ENCODE measurements at regions of chr9 and their contacts with region 1.

Region 1: GRCh38 chr9:38088006-38088925 is 19.2 kb upstream of the SHB start:
- DNase-seq: peak; percentile 34 to 85 (median 68)
- ATAC-seq: peak; percentile 86
- H3K4me3 ChIP-seq: no peak overlapping the region
- H3K4me3 Mint-ChIP-seq: no peak overlapping the region
- H3K27ac ChIP-seq: no peak overlapping the region
- H3K27ac Mint-ChIP-seq: no peak overlapping the region
- H3K4me1 ChIP-seq: no peaks in the 10 kb centered on the region
- H3K4me1 Mint-ChIP-seq: no peaks in the 10 kb centered on the region
- H3K27me3 ChIP-seq: no peaks in the 10 kb centered on the region
- H3K27me3 Mint-ChIP-seq: peaks cover 8% of the 10 kb centered on the region
- CTCF ChIP-seq: peak; percentile 97

Region 2: GRCh38 chr9:37913480-37914153 is 174.6 kb before region 1 on chr9:
- CTCF ChIA-PET with region 1: interaction called, 37 read pairs
- POLR2A ChIA-PET with region 1: no interaction called
- intact Hi-C with region 1: loop called (anchors 1 to 5 kb)
- DNase-seq: peak; percentile 65 to 89 (median 78)
- ATAC-seq: peak; percentile 93
- H3K4me3 ChIP-seq: no peak overlapping the region
- H3K4me3 Mint-ChIP-seq: no peak overlapping the region
- H3K27ac ChIP-seq: no peak overlapping the region
- H3K27ac Mint-ChIP-seq: no peak overlapping the region
- H3K4me1 ChIP-seq: no peaks in the 10 kb centered on the region
- H3K4me1 Mint-ChIP-seq: no peaks in the 10 kb centered on the region
- H3K27me3 ChIP-seq: no peaks in the 10 kb centered on the region
- H3K27me3 Mint-ChIP-seq: peaks cover 2% of the 10 kb centered on the region
- CTCF ChIP-seq: peak; percentile 99

Region 3: GRCh38 chr9:38061326-38061977 is 26.8 kb before region 1 on chr9:
- CTCF ChIA-PET with region 1: interaction called, 10 read pairs
- POLR2A ChIA-PET with region 1: no interaction called
- intact Hi-C with region 1: no loop called
- DNase-seq: no peak
- ATAC-seq: no peak
- H3K4me3 ChIP-seq: no peak overlapping the region
- H3K4me3 Mint-ChIP-seq: no peak overlapping the region
- H3K27ac ChIP-seq: no peak overlapping the region
- H3K27ac Mint-ChIP-seq: no peak overlapping the region
- H3K4me1 ChIP-seq: no peaks in the 10 kb centered on the region
- H3K4me1 Mint-ChIP-seq: no peaks in the 10 kb centered on the region
- H3K27me3 ChIP-seq: no peaks in the 10 kb centered on the region
- H3K27me3 Mint-ChIP-seq: no peaks in the 10 kb centered on the region
- CTCF ChIP-seq: no peak

Region 4: DNA sequence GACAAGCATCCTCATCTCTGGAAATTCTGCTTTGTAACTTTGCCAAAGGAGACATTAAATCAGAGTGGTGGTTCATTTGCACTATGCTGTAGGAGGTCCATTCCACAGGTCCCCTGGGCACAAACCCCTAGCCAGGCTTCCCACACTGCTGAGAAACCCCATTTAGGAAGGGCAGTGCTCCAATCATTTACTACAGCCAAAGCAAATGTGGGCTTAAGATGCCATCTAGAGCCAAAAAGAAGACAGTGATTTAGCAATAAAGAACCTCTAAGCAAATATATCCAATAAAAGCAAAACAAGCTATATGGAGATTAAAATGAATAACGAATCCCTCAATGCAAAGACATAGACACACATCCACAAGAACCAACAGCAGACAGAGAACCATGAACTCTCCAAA is 175.3 kb after region 1 on chr9:
- CTCF ChIA-PET with region 1: interaction called, 4 read pairs
- POLR2A ChIA-PET with region 1: no interaction called
- intact Hi-C with region 1: loop called (anchors 5 to 10 kb)
- DNase-seq: peak in 2 of 9 experiments; percentile 29 to 44
- ATAC-seq: no peak
- H3K4me3 ChIP-seq: no peak overlapping the region
- H3K4me3 Mint-ChIP-seq: no peak overlapping the region
- H3K27ac ChIP-seq: no peak overlapping the region
- H3K27ac Mint-ChIP-seq: no peak overlapping the region
- H3K4me1 ChIP-seq: no peaks in the 10 kb centered on the region
- H3K4me1 Mint-ChIP-seq: no peaks in the 10 kb centered on the region
- H3K27me3 ChIP-seq: no peaks in the 10 kb centered on the region
- H3K27me3 Mint-ChIP-seq: peaks cover 4% of the 10 kb centered on the region
- CTCF ChIP-seq: no peak

Region 5: GRCh38 chr9:38392235-38393127 is 304.2 kb after region 1 on chr9 and contains the start of gene ALDH1B1:
- CTCF ChIA-PET with region 1: interaction called, 5 read pairs
- POLR2A ChIA-PET with region 1: no interaction called
- intact Hi-C with region 1: loop called in 1 of 2 experiments (anchors 10 kb)
- DNase-seq: peak; percentile 14 to 81 (median 61)
- ATAC-seq: peak; percentile 93
- H3K4me3 ChIP-seq: peak within 1 kb of the TSS; percentile 63 to 89
- H3K4me3 Mint-ChIP-seq: peak within 1 kb of the TSS; percentile 85
- H3K27ac ChIP-seq: peak within 1 kb of the TSS; percentile 11 to 46
- H3K27ac Mint-ChIP-seq: peak within 1 kb of the TSS; percentile 69
- H3K4me1 ChIP-seq: no peaks in the 10 kb centered on the region
- H3K4me1 Mint-ChIP-seq: peaks cover 17% of the 10 kb centered on the region
- H3K27me3 ChIP-seq: no peaks in the 10 kb centered on the region
- H3K27me3 Mint-ChIP-seq: no peaks in the 10 kb centered on the region
- CTCF ChIP-seq: no peak
- total RNA-seq, gene ALDH1B1: 0.50 to 0.71 TPM